WTC11 (cell line): ENCODE measurements at regions of chr12 and their contacts with region 1.

Region 1: DNA sequence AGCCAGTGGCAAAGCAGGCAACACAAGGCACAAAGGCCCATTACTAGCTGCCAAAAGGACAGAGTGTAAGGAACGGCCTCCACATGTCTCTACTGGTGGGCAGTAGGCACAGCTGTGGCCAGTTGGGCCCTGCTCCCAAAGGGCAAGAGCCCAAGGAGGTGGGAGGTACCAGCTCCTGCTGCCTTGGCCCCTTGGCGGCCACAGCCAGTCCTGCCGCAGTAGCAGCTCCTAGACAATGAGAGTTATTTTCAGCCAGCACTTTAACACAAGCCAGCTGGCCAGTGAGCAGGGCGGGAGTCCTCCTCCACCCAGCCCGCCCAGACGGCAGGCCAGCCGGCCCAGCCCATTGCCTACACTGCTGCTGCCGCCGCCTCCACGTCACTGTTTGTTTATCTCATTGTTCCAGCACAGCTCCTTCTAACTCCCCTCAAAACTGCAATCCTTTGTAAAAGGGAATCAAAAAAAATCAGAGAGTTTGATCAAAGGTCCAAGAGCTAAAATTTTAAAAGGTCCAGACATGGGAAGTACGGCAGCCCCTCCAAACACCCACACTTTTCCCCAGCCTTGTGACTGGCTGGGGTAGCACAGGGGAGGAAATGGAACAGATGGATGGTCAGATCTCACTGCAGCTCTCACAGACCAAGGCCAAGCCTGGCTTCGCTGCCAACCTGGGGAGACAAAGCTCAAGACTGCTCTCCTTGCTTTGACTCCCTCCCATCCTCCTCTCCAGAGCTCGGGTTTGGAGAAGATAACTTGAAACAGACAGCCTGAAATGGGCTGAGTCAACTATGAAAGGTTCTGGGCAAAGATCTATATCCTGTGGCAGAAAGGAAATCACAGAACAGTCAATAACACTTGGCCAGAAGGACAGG is 33.5 kb downstream of the FMNL3 start:
- DNase-seq: peak; percentile 66
- ATAC-seq: peak; percentile 93
- H3K4me3 Mint-ChIP-seq: no peak overlapping the region
- H3K27ac Mint-ChIP-seq: peak overlapping the region; percentile 97
- H3K4me1 Mint-ChIP-seq: peaks cover 30% of the 10 kb centered on the region
- H3K27me3 Mint-ChIP-seq: no peaks in the 10 kb centered on the region
- CTCF ChIP-seq: no peak

Region 2: DNA sequence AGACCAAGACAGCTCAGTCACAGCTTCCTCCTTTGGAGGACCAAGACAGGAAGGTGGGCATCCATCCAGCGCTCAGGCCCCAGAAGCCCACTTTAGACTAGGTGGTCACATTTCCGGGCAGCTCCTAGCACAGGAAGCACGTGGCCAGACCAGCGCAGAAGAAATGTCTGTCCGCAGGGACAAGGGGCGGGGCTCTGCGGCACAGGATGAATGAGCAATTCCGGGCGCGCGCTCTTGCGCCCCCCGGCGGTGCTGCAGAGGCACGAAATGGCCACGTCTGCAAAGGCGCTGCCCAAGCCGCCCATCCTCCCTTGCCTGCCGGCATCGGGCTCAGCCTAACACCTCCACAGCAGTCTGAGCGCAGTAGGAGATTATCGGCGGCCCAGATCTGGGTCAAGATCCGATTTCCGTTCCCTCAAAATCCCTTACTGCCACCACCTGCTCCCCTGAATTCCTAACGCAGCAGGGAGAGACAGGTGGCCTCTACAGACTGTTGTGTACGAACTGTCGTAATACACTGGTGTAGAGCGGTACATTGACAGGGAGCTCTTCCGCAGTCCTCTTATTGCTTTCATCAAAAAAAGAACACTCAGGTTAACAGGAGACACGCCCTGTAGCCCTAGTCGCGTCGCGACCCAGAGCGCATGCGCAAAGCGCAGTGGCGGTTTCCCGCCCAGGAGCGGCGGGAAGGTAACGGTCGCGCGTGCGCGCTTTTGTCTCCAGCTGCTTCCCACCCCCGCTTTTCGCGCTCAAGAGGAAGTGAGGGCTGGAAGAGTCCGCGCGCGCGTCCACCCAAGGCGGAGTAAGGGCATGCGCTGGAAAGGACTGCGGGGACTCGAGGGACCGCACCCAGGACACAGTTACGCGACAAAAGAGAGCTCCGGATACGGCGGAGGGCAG is 543.3 kb before region 1 on chr12:
- CTCF ChIA-PET with region 1: no interaction called
- POLR2A ChIA-PET with region 1: no interaction called
- DNase-seq: peak; percentile 90
- ATAC-seq: peak; percentile 65
- H3K4me3 Mint-ChIP-seq: peak overlapping the region; percentile 90
- H3K27ac Mint-ChIP-seq: peak overlapping the region; percentile 99
- H3K4me1 Mint-ChIP-seq: peaks cover 19% of the 10 kb centered on the region
- H3K27me3 Mint-ChIP-seq: no peaks in the 10 kb centered on the region; the same call in 1 of the 2 replicates
- CTCF ChIP-seq: peak; percentile 64

Region 3: GRCh38 chr12:49662998-49663843 is 10.5 kb before region 1 on chr12:
- CTCF ChIA-PET with region 1: interaction called, 10 read pairs
- POLR2A ChIA-PET with region 1: no interaction called
- DNase-seq: peak; percentile 40
- ATAC-seq: peak; percentile 94
- H3K4me3 Mint-ChIP-seq: no peak overlapping the region
- H3K27ac Mint-ChIP-seq: peak overlapping the region; percentile 95
- H3K4me1 Mint-ChIP-seq: peaks cover 23% of the 10 kb centered on the region
- H3K27me3 Mint-ChIP-seq: no peaks in the 10 kb centered on the region
- CTCF ChIP-seq: no peak

Region 4: DNA sequence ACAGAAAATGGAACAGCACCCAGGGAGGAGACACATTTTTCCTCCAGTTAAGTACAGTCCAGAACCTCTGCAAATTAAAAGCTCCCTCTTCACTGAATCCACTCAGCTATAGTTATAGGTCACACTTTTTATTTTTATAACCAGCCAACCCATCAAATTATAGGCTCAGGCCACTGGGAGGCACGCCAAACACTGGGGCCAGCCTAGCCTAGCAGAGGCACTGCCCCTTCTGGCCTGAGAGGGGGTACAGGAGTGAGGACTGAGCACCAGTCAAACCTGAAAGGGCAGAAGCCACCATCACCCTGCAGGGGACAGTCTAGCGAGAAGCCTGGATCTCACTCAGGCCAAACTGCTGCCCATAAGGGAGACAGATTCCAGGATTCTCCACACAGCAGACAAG is 14.3 kb after region 1 on chr12:
- CTCF ChIA-PET with region 1: interaction called, 22 read pairs
- POLR2A ChIA-PET with region 1: interaction called, 4 read pairs
- DNase-seq: peak; percentile 36
- ATAC-seq: peak; percentile 97
- H3K4me3 Mint-ChIP-seq: no peak overlapping the region
- H3K27ac Mint-ChIP-seq: no peak overlapping the region
- H3K4me1 Mint-ChIP-seq: peaks cover 21% of the 10 kb centered on the region
- H3K27me3 Mint-ChIP-seq: no peaks in the 10 kb centered on the region
- CTCF ChIP-seq: no peak